Heart left ventricle (tissue), 16 donors: ENCODE measurements at regions of chr1 and their contacts with region 1.

Region 1: GRCh38 chr1:150829743-150830142 is 21.7 kb upstream of the CTSK start:
- DNase-seq: no peak
- ATAC-seq: no peak
- H3K4me3 ChIP-seq: no peak overlapping the region
- H3K27ac ChIP-seq: no peak overlapping the region
- H3K4me1 ChIP-seq: no peaks in the 10 kb centered on the region
- H3K27me3 ChIP-seq: no peaks in the 10 kb centered on the region
- CTCF ChIP-seq: peak in 2 of 12 donors; percentile 17 to 28
- POLR2A ChIP-seq: no peak

Region 2: DNA sequence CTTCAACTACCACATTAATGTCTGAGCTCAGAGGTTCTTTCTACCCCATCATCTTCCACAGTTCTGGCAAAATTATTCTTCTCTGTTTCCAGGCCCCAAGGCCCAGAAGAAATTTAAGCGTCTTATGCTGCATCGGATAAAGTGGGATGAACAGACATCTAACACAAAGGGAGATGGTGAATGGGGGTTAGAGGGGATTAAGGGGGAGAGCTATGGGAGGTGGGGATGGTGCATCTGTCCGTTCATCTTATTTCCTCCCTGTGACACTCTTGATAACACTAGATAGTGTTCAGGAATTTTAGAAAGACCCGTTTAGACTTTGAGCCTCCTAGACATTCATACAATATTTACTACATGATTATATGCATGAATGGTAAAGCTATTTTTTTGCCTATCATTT is 483.4 kb before region 1 on chr1:
- intact Hi-C with region 1: loop called in 1 of 10 experiments (anchors 10 kb)
- DNase-seq: no peak
- ATAC-seq: no peak
- H3K4me3 ChIP-seq: no peak overlapping the region
- H3K27ac ChIP-seq: no peak overlapping the region
- H3K4me1 ChIP-seq: no peaks in the 10 kb centered on the region
- H3K27me3 ChIP-seq: no peaks in the 10 kb centered on the region
- CTCF ChIP-seq: no peak
- POLR2A ChIP-seq: no peak

Region 3: GRCh38 chr1:150931773-150932172 is 102.0 kb after region 1 on chr1:
- intact Hi-C with region 1: loop called in 1 of 10 experiments (anchors 5 kb)
- DNase-seq: no peak
- ATAC-seq: no peak
- H3K4me3 ChIP-seq: no peak overlapping the region
- H3K27ac ChIP-seq: no peak overlapping the region
- H3K4me1 ChIP-seq: peaks cover 0 to 26% (median 8%) of the 10 kb centered on the region in 12 donors
- H3K27me3 ChIP-seq: no peaks in the 10 kb centered on the region
- CTCF ChIP-seq: no peak
- POLR2A ChIP-seq: no peak

Region 4: DNA sequence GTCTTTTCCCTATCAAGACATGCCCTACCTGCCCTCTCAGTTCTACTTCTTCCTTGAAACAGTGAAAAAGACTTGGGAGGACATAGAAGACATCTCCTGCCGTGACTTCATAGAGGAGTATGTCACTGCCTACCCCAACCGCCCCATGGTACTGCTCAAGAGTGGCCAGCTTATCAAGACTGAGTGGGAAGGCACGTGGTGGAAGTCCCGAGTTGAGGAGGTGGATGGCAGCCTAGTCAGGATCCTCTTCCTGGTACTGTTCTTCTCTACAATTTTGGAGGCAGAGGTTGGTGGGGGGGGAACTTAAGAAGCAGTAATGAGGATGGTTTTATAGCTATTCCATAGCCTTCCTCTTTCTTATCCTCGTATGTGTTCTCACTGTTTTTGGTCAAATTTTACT is 115.1 kb after region 1 on chr1:
- intact Hi-C with region 1: loop called in 1 of 10 experiments (anchors 5 kb)
- DNase-seq: no peak
- ATAC-seq: no peak
- H3K4me3 ChIP-seq: no peak overlapping the region
- H3K27ac ChIP-seq: no peak overlapping the region
- H3K4me1 ChIP-seq: no peaks in the 10 kb centered on the region
- H3K27me3 ChIP-seq: no peaks in the 10 kb centered on the region
- CTCF ChIP-seq: no peak
- POLR2A ChIP-seq: no peak

Region 5: DNA sequence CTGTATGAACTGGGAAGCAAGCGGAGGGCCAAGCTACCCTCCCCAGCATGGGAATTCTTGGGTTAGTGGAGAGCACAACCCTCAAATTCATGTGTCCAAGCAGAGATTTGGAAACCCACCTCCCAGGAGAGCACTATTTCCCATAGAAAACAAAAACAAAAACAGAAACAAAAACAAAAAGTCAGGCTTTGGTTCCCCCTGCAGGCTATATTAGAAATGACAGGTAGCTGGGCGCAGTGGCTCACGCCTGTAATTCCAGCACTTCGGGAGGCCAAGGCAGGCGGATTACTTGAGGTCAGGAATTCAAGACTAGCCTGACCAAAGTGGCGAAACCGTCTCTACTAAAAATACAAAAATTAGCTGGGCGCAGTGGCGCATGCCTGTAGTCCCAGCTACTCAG is 166.2 kb after region 1 on chr1:
- intact Hi-C with region 1: no loop called
- DNase-seq: no peak
- ATAC-seq: peak in 3 of 4 donors; percentile 31 to 58 (median 50)
- H3K4me3 ChIP-seq: peak overlapping the region in 7 of 12 donors; percentile 2 to 40 (median 18)
- H3K27ac ChIP-seq: peak overlapping the region in 10 of 12 donors; percentile 0 to 71 (median 46)
- H3K4me1 ChIP-seq: peaks cover 0 to 25% (median 8%) of the 10 kb centered on the region in 12 donors
- H3K27me3 ChIP-seq: no peaks in the 10 kb centered on the region
- CTCF ChIP-seq: peak; percentile 77 to 90 (median 85)
- POLR2A ChIP-seq: no peak